ENCODE measurements at regions of chr7 and their contacts with region 1.

Region 1: GRCh38 chr7:129163875-129164544 is 19.5 kb downstream of the TSPAN33 start:
- DNase-seq: peak; percentile 76
- H3K4me3 ChIP-seq: no peak overlapping the region; a peak in 1 of 4 replicates
- H3K27ac ChIP-seq: no peak overlapping the region
- H3K4me1 ChIP-seq: peaks cover 0 to 10% of the 10 kb centered on the region in 2 experiments; a peak in 1 of 4 replicates
- H3K27me3 ChIP-seq: no peaks in the 10 kb centered on the region
- CTCF ChIP-seq: peak; percentile 100
- EP300 ChIP-seq: no peak
- RAD21 ChIP-seq: peak; percentile 79

Region 2: DNA sequence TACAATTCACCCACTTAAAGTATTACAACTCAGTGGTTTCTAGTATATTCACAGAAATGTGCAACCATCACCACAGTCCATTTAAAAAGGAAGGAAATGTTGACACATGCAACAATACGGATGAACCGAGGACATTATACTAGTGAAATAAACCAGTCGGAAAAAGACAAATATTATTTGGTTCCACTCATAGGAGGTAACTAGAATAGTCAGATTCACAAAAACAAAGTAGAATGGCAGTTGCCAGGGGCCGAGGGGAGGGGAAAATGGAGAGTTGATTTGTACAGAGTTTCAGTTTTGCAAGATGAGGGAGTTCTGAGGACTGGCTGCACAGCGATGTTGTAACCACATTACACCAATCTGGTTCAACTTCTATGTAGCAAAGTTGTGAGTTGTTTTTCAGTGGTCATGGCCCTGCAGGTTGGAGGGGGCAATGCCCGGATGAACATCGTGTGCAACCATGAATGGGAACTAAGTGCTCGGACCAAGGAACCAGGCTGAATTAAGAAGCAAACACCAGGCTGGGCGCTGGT is 91.5 kb before region 1 on chr7:
- CTCF ChIA-PET with region 1: no interaction called
- POLR2A ChIA-PET with region 1: no interaction called
- DNase-seq: no peak
- H3K4me3 ChIP-seq: no peak overlapping the region
- H3K27ac ChIP-seq: no peak overlapping the region
- H3K4me1 ChIP-seq: no peaks in the 10 kb centered on the region
- H3K27me3 ChIP-seq: peaks cover 8% of the 10 kb centered on the region; the same call in 1 of the 2 replicates
- CTCF ChIP-seq: no peak
- EP300 ChIP-seq: no peak
- RAD21 ChIP-seq: no peak

Region 3: DNA sequence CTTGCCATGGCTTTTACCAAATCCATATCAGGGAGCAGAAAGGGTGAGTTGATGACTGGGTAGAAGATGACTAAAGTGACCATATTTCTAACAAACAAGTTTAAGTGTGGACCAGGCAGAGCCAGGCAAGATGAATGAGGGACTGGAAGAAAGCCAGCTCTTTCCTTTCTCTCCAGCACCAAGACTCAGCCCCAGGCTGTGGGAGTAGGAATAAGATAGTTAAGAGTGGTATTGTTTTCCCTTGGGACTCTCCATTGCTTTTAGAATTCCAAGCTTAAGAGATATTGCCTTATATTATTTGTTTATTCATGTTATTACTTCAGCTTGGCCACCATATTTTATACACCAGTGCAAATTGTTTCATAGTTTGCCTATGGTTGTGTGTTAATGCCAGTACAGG is 48.3 kb before region 1 on chr7:
- CTCF ChIA-PET with region 1: interaction called, 13 read pairs
- POLR2A ChIA-PET with region 1: no interaction called
- DNase-seq: no peak
- H3K4me3 ChIP-seq: no peak overlapping the region
- H3K27ac ChIP-seq: no peak overlapping the region
- H3K4me1 ChIP-seq: peaks cover 0 to 3% of the 10 kb centered on the region in 2 experiments; a peak in 1 of 4 replicates
- H3K27me3 ChIP-seq: peaks cover 12% of the 10 kb centered on the region; the same call in 1 of the 2 replicates
- CTCF ChIP-seq: no peak
- EP300 ChIP-seq: no peak
- RAD21 ChIP-seq: no peak

Region 4: DNA sequence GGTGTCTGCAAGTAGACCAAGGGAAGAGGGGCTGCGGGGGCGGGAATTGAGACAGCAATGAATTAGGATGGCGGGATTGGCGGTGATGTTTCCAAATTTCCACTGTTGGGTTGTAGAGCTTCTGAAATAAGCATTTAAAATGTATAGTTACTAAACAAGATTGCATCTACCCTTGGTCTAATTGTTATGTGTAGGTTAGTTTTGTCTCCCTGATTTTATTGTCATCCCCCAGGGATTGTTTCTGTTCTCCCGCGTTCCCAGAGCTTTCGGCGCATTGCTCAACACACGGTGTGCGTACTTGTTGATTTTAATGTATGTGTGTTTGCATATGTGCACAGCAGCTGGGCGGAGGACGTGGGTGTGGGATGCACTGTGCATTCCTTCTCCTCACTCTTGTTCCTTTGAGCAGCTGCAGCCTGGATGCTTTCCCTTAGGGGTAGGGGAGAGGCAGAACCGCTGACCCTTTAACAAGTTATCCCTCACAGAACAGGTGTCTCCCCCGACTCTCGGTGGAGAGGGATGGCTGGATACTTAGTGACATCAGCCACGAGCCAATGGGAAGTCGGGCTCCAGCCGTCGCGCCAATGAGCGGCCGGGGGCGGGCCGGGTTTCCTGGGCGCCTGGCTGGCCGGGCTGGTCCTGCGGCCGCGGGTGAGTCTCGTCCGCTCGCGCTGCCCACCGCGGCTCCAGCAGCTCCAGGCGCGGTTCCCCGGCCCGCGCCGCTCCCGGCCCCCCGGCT is 19.7 kb before region 1 on chr7 and contains the start of gene TSPAN33:
- CTCF ChIA-PET with region 1: interaction called, 111 read pairs
- POLR2A ChIA-PET with region 1: no interaction called
- DNase-seq: peak; percentile 99
- H3K4me3 ChIP-seq: peak within 1 kb of the TSS; percentile 60 to 66
- H3K27ac ChIP-seq: no peak within 1 kb of the TSS
- H3K4me1 ChIP-seq: peaks cover 0 to 25% of the 10 kb centered on the region in 2 experiments; a peak in 2 of 4 replicates
- H3K27me3 ChIP-seq: peaks cover 27% of the 10 kb centered on the region
- CTCF ChIP-seq: no peak
- EP300 ChIP-seq: no peak
- RAD21 ChIP-seq: no peak
- polyA plus RNA-seq, gene TSPAN33: 6.9 and 7.2 TPM in 2 replicates

Region 5: DNA sequence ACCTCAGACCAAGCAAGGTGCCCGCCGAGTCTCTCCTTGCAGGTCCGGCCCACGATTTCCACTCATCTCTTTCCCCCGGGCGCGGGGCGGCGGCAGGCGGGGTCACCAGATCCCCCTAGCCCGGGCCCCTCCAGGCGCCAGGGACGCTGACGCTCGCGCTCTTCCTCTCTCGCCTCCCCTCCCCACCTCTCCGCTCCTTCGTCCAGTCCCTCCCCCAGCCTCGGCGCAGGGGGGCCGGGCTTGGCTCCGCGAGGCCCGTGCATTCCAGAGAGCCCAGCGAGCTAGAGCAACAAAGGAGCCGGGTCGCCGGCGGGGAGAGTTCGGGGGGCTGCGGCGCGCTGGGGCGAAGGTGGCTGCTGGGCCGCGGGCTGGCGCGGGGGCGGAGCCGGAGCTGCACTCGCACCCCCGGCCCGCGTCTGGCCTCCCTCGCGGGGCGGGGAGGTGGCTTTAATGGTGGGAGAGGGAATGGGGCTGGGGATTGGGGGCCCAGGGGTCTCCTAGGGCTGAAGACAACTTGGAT is 24.4 kb after region 1 on chr7 and contains the start of gene SMO:
- CTCF ChIA-PET with region 1: interaction called, 45 read pairs
- POLR2A ChIA-PET with region 1: no interaction called
- DNase-seq: peak; percentile 96
- H3K4me3 ChIP-seq: peak within 1 kb of the TSS; percentile 72 to 93
- H3K27ac ChIP-seq: peak within 1 kb of the TSS; percentile 42 to 54; a peak in 2 of 4 replicates
- H3K4me1 ChIP-seq: peaks cover 0 to 20% of the 10 kb centered on the region in 2 experiments; a peak in 2 of 4 replicates
- H3K27me3 ChIP-seq: no peaks in the 10 kb centered on the region
- CTCF ChIP-seq: no peak
- EP300 ChIP-seq: 0 out of 4 replicates have a peak, but pooled peaks of 1 of the 2 experiments have one; percentile 12
- RAD21 ChIP-seq: no peak
- polyA plus RNA-seq, gene SMO: 34.5 and 37.0 TPM in 2 replicates

Region 6: DNA sequence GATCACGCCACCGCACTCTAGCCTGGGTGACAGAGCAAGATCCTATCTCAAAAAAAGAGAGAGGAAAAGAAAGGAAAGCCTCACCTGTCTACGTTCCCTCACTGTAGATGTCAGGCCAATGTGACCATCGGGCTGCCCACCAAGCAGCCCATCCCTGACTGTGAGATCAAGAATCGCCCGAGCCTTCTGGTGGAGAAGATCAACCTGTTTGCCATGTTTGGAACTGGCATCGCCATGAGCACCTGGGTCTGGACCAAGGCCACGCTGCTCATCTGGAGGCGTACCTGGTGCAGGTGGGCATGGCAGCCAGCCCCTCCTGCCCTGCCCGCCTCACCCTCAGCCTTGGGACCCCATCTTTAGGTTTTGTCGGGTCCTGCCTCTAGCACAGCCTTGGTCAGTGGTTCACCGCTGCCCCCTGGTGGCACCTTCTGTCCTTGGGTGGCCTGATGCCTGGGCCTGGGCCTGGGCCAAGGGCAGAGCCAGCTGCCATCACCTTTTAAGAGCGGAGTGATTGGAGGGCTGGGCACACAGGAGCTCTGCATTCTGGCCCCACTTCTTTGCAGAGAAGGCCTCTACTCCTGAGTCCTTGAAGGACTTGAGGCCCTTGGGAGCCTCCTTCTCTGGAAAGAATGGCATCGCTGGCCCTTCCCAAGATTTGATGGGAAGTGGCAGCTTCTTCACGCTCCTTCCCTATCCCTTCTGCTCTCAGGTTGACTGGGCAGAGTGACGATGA is 46.4 kb after region 1 on chr7:
- CTCF ChIA-PET with region 1: interaction called, 385 read pairs
- POLR2A ChIA-PET with region 1: interaction called, 6 read pairs
- DNase-seq: peak; percentile 94
- H3K4me3 ChIP-seq: no peak overlapping the region; a peak in 1 of 4 replicates
- H3K27ac ChIP-seq: no peak overlapping the region
- H3K4me1 ChIP-seq: peaks cover 0 to 6% of the 10 kb centered on the region in 2 experiments; a peak in 1 of 4 replicates
- H3K27me3 ChIP-seq: no peaks in the 10 kb centered on the region
- CTCF ChIP-seq: peak; percentile 96
- EP300 ChIP-seq: no peak
- RAD21 ChIP-seq: peak; percentile 89

Region 7: GRCh38 chr7:129271500-129272355 is 107.7 kb after region 1 on chr7:
- CTCF ChIA-PET with region 1: interaction called, 10 read pairs
- POLR2A ChIA-PET with region 1: no interaction called
- DNase-seq: peak; percentile 57
- H3K4me3 ChIP-seq: no peak overlapping the region
- H3K27ac ChIP-seq: no peak overlapping the region
- H3K4me1 ChIP-seq: no peaks in the 10 kb centered on the region
- H3K27me3 ChIP-seq: no peaks in the 10 kb centered on the region
- CTCF ChIP-seq: peak; percentile 71
- EP300 ChIP-seq: peak in 1 of 2 experiments; percentile 48; a peak in 1 of 4 replicates
- RAD21 ChIP-seq: peak; percentile 81